ENCODE measurements at regions of chrX and their contacts with region 1.

Region 1: DNA sequence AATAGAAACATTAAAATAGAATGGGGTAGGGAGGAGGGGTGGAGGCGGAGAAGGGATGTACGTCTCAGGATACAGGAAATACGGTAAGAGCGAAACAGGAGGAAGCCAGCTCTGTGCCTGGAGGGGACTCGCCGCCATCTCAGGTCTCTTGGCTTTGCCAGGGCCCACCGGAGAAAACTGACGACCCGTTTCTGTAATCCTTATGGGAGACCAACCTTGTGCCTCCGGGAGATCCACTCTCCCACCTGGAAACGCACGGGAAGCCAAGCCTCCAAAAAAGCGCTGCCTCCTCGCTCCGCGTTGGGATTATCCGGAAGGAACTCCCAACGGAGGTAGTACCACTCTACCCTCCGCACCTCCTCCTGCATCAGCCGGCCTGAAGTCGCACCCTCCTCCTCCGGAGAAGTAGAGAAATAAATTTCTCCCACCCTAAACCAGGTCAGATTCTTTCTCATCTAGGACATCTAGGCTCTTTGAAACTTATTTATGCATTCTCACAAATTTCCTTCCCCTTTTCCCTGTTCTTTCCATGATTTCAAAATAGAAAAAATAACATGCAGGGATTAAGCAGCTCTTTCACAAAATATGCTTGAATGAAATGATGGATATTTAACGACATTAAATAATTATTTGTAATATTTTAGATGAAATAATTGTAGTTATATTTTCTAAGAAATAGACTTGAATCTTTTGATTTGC is at the start of gene NBDY:
- DNase-seq: peak; percentile 60
- H3K4me3 ChIP-seq: peak within 1 kb of the TSS; percentile 53 to 72 (median 69)
- H3K27ac ChIP-seq: peak within 1 kb of the TSS; percentile 65
- H3K4me1 ChIP-seq: no peaks in the 10 kb centered on the region
- H3K27me3 ChIP-seq: no peaks in the 10 kb centered on the region
- CTCF ChIP-seq: no peak
- total RNA-seq, gene NBDY: 12.5 to 54.3 TPM

Region 2: GRCh38 chrX:56219700-56220099 is 509.6 kb before region 1 on chrX:
- CTCF ChIA-PET with region 1: no interaction called
- dilution Hi-C with region 1: no loop called
- in situ Hi-C with region 1: no loop called
- intact Hi-C with region 1: loop called (anchors 5 kb)
- DNase-seq: no peak
- H3K4me3 ChIP-seq: no peak overlapping the region
- H3K27ac ChIP-seq: no peak overlapping the region
- H3K4me1 ChIP-seq: no peaks in the 10 kb centered on the region
- H3K27me3 ChIP-seq: peaks cover 2% of the 10 kb centered on the region
- CTCF ChIP-seq: peak; percentile 29 to 38

Region 3: DNA sequence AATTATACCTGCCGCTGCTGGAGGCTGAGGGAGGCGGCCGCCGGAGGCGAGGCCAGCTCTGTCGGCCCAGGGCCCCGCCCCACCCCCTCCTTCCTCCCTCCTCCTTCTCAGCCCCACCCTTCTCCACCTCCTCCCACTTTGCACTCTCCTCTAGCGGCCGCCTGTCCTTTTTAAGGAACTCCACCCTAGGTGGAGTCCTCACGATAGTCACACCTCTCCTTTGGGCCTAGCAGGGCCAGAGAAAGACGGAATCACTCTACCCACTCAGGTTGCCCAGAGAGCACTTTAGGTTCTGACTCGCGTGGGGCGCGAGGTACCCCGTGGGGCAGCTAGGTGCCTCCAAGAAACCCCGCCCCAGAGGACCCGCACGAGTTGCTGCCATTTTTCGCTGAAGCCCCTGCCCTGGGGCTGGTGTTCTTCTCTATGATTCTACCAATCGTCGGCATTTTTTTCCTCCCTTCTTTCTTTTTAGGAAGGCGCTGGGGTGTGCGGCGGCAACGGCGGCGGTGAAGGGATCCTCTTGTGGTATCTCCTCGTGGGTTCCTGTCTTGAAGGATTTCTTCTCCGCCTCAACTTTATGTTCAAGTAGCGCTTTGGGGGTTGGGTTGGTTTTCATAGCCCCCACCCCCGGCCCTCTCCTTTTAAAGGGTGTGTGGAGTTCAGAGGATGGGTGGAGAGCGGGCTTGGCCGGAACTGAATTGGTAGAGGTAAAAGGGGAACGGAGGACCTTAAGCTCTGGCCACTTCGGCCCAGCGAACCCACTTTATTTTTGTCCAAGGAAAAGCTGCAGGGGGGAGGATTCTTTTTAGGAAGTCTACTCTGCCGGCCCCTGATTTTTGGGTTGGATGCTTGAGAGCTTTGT is 496.8 kb before region 1 on chrX and contains the start of gene KLF8:
- CTCF ChIA-PET with region 1: no interaction called
- dilution Hi-C with region 1: no loop called
- in situ Hi-C with region 1: no loop called
- intact Hi-C with region 1: loop called (anchors 2 kb)
- DNase-seq: peak; percentile 71
- H3K4me3 ChIP-seq: peak within 1 kb of the TSS; percentile 47 to 57 (median 53)
- H3K27ac ChIP-seq: peak within 1 kb of the TSS; percentile 49
- H3K4me1 ChIP-seq: peaks cover 3% of the 10 kb centered on the region
- H3K27me3 ChIP-seq: no peaks in the 10 kb centered on the region
- CTCF ChIP-seq: no peak
- total RNA-seq, gene KLF8: 15.6 to 22.0 TPM

Region 4: DNA sequence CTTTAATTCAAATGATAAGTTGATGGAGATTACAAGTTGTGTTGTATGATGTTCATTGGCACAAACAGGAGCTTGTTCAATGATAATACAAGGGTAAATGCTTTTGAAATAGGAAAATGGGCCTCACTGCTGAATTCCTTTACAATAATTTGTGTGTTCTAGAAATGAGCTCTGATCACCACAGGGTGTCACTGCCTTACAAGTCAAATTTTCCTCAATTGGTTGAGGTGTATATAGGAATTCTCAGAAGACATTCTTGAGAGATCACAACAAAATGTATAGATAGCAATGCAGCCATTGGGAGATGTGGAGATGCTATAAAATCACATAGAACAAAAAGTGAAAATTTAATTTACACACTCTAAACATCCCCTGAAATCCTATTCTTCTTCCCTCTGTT is 447.5 kb before region 1 on chrX:
- CTCF ChIA-PET with region 1: no interaction called
- dilution Hi-C with region 1: no loop called
- in situ Hi-C with region 1: loop called in 1 of 2 experiments (anchors 25 kb)
- intact Hi-C with region 1: loop called (anchors 2 kb)
- DNase-seq: peak; percentile 5
- H3K4me3 ChIP-seq: no peak overlapping the region
- H3K27ac ChIP-seq: no peak overlapping the region
- H3K4me1 ChIP-seq: no peaks in the 10 kb centered on the region
- H3K27me3 ChIP-seq: peaks cover 1% of the 10 kb centered on the region
- CTCF ChIP-seq: peak; percentile 15 to 30

Region 5: DNA sequence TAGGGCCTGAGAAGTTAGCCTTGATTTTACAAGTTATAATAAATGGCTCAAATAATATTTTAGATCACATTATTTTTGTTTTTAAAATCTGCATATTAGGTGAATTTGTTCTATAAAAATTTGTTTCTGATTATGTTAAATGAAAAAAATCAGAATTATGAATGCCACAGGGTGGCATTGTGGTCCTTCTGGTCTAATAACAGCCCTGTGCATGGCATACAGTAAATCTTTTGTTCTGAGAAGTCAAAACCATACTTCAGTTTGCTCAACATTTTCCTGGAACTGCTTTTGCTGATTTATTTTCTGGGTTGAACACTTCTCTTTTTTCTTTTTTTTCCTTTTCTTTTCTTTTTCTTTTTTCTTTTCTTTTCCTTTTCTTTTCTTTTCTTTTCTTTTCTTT is 266.9 kb before region 1 on chrX:
- CTCF ChIA-PET with region 1: no interaction called
- dilution Hi-C with region 1: no loop called
- in situ Hi-C with region 1: loop called in 1 of 2 experiments (anchors 25 kb)
- intact Hi-C with region 1: loop called (anchors 1 kb)
- DNase-seq: no peak
- H3K4me3 ChIP-seq: no peak overlapping the region
- H3K27ac ChIP-seq: no peak overlapping the region
- H3K4me1 ChIP-seq: no peaks in the 10 kb centered on the region
- H3K27me3 ChIP-seq: peaks cover 8% of the 10 kb centered on the region
- CTCF ChIP-seq: no peak

Measured in mammary epithelial cell (primary cell).